Mammary epithelial cell (primary cell): ENCODE measurements at regions of chr1 and their contacts with region 1.

Region 1: DNA sequence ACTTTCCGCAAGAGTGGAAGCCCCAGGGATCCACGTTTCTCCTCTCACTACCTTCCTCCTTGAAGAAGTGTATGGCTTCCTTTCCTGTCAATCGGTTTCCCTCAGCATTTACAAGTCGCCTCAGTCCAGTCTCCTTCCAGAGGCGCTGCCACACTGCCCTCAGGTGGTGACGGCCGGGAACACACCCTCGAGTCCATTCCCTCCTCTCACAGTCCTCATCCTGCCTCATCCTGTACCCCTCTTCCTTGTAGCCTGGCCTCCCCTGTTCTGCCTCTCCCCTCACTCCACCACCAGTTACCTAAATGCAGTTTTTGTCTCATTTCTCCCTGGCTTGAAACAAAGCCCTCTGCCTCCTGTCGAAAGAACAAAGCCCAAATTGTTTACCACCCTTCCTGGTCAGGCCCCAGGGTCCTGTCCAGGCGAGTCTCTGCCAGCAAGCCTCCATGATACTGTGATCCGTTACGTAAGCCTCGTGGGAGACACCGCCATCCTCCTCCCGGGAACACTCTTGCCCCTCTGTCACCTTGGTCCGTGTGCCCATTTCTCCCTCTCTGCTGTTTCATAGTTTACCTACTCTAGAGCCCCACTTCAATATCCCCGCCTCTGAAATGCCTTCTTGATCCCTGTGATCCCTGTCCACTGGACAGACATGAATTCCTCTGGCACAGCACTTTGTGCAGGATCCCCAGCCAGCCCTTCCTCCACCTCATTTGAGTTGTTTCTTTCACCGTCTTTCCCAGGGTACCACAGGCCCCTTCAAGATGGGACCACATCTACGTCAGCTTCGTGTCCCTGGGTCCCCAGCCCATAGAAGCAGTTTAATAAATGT is 23.3 kb upstream of the LSM10 start:
- DNase-seq: peak; percentile 76
- H3K4me3 ChIP-seq: no peak overlapping the region
- H3K27ac ChIP-seq: peak overlapping the region; percentile 49
- H3K4me1 ChIP-seq: peaks cover 18% of the 10 kb centered on the region
- H3K27me3 ChIP-seq: no peaks in the 10 kb centered on the region
- CTCF ChIP-seq: peak; percentile 86 to 97

Region 2: DNA sequence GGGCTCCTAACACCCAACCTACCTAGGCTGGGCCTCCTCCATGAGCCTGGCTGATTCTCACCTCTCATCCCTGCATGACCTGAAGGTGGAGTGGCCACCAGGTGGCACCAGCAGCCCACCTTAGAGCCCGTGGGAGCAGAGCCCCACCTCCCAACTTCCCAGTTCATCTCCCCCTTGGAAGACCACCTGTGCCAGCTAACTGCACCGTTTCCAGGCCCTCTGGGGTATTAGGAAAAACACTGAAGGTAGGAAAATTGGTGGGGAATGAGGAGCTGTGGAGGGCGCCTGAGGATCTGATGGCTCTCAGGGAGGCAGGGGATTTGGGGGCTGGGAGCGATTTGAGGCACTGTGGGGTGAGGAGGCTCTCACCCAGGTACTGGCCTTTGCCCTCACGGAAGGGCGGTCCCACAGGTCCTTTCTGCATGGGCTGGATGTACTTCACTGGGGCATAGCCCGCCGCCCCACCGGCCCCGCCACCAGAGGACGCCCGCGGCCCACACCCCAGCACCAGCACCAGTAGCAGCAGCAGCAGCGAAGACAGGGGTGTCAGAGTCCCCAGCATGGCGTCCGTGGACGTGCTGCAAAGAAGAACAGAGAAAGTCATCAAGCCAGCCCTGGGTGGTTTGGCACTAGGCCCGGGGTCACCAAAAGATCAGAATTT is 321.2 kb before region 1 on chr1:
- CTCF ChIA-PET with region 1: no interaction called
- dilution Hi-C with region 1: no loop called
- in situ Hi-C with region 1: no loop called
- intact Hi-C with region 1: loop called (anchors 2 kb)
- DNase-seq: peak; percentile 49
- H3K4me3 ChIP-seq: no peak overlapping the region
- H3K27ac ChIP-seq: no peak overlapping the region
- H3K4me1 ChIP-seq: peaks cover 4% of the 10 kb centered on the region
- H3K27me3 ChIP-seq: no peaks in the 10 kb centered on the region
- CTCF ChIP-seq: peak; percentile 86 to 96

Region 3: GRCh38 chr1:36285448-36286101 is 135.5 kb before region 1 on chr1:
- CTCF ChIA-PET with region 1: no interaction called
- dilution Hi-C with region 1: no loop called
- in situ Hi-C with region 1: no loop called
- intact Hi-C with region 1: loop called (anchors 5 kb)
- DNase-seq: peak; percentile 68
- H3K4me3 ChIP-seq: no peak overlapping the region
- H3K27ac ChIP-seq: no peak overlapping the region
- H3K4me1 ChIP-seq: no peaks in the 10 kb centered on the region
- H3K27me3 ChIP-seq: no peaks in the 10 kb centered on the region
- CTCF ChIP-seq: peak; percentile 60 to 70

Region 4: DNA sequence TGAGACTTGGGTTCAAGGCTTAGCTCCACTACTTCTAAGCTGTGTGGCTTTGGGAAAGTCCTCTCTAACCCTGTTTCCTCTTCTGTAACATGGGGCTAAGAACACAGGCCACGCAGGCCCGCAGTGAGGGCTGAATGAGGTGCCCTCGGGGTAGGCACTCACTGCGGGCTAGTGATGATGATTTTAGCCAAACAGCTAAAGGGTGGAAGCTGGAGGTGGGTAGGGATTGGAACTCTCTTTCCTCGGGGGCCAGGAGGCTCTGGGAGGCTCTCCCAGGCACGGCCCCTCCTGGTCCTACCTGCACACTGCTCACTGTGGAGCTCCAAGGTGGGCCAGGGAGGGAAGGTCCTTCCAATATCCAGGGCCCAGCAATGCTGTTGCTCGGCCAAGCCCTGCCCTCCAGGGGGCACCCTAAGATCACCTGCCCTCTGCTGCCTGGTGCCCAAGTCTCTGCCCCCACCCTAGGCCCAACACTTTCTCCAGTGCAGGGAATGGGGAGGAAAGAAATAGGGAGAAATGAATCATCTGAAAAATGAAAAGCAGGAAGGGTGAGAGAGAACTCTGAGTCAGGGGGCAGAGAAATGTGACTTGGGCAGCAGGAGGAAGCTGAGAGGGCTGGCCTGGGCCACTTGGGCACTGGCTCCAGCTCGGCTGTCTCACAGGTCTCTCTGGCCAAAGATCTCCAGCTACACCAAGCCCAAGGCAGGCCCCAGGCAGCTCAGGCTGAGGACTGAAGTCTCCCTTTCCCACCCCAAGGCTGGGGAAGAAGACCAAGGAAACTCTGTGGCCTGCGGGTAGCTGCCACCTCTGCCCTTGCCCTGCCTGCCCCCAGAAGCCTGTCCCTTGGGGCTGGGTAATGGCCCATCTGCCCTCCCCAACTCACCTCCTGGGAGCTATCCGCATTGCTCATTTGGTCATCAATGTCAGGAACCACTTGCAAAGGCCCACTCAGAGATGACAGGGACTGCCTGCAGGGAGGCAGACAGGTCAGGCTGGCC is 78.3 kb before region 1 on chr1:
- CTCF ChIA-PET with region 1: no interaction called
- dilution Hi-C with region 1: no loop called
- in situ Hi-C with region 1: loop called in 1 of 2 experiments (anchors 10 kb)
- intact Hi-C with region 1: loop called (anchors 1 kb)
- DNase-seq: peak; percentile 77
- H3K4me3 ChIP-seq: no peak overlapping the region
- H3K27ac ChIP-seq: peak overlapping the region; percentile 30
- H3K4me1 ChIP-seq: peaks cover 15% of the 10 kb centered on the region
- H3K27me3 ChIP-seq: no peaks in the 10 kb centered on the region
- CTCF ChIP-seq: peak; percentile 77

Region 5: GRCh38 chr1:36369061-36369861 is 51.8 kb before region 1 on chr1:
- CTCF ChIA-PET with region 1: interaction called, 28 read pairs
- dilution Hi-C with region 1: no loop called
- in situ Hi-C with region 1: no loop called
- intact Hi-C with region 1: loop called (anchors 1 kb)
- DNase-seq: peak; percentile 50
- H3K4me3 ChIP-seq: no peak overlapping the region
- H3K27ac ChIP-seq: no peak overlapping the region
- H3K4me1 ChIP-seq: peaks cover 24% of the 10 kb centered on the region
- H3K27me3 ChIP-seq: no peaks in the 10 kb centered on the region
- CTCF ChIP-seq: peak; percentile 85 to 90

Region 6: GRCh38 chr1:36497207-36497606 is 76.2 kb after region 1 on chr1:
- CTCF ChIA-PET with region 1: no interaction called
- dilution Hi-C with region 1: no loop called
- in situ Hi-C with region 1: no loop called
- intact Hi-C with region 1: no loop called
- DNase-seq: no peak
- H3K4me3 ChIP-seq: no peak overlapping the region
- H3K27ac ChIP-seq: no peak overlapping the region
- H3K4me1 ChIP-seq: no peaks in the 10 kb centered on the region
- H3K27me3 ChIP-seq: no peaks in the 10 kb centered on the region
- CTCF ChIP-seq: no peak